ENCODE measurements at regions of chr11 and their contacts with region 1.

Region 1: GRCh38 chr11:2420502-2421225 is 20.1 kb downstream of the TSSC4 start:
- DNase-seq: peak; percentile 72 to 89
- ATAC-seq: peak; percentile 85 to 98 (median 95)
- H3K4me3 ChIP-seq: no peak overlapping the region
- H3K4me3 Mint-ChIP-seq: no peak overlapping the region
- H3K27ac ChIP-seq: no peak overlapping the region
- H3K27ac Mint-ChIP-seq: no peak overlapping the region
- H3K4me1 ChIP-seq: peaks cover 15% of the 10 kb centered on the region
- H3K4me1 Mint-ChIP-seq: peaks cover 0 to 5% of the 10 kb centered on the region in 2 donors
- H3K27me3 ChIP-seq: no peaks in the 10 kb centered on the region
- H3K27me3 Mint-ChIP-seq: no peaks in the 10 kb centered on the region
- CTCF ChIP-seq: peak; percentile 91

Region 2: GRCh38 chr11:2186669-2187279 is 233.9 kb before region 1 on chr11:
- intact Hi-C with region 1: loop called (anchors 1 kb)
- DNase-seq: peak; percentile 51 to 77
- ATAC-seq: peak; percentile 76 to 98 (median 92)
- H3K4me3 ChIP-seq: no peak overlapping the region
- H3K4me3 Mint-ChIP-seq: no peak overlapping the region
- H3K27ac ChIP-seq: no peak overlapping the region
- H3K27ac Mint-ChIP-seq: no peak overlapping the region
- H3K4me1 ChIP-seq: peaks cover 17% of the 10 kb centered on the region
- H3K4me1 Mint-ChIP-seq: peaks cover 0 to 5% of the 10 kb centered on the region in 2 donors
- H3K27me3 ChIP-seq: no peaks in the 10 kb centered on the region
- H3K27me3 Mint-ChIP-seq: peaks cover 15 to 18% of the 10 kb centered on the region in 2 donors
- CTCF ChIP-seq: peak; percentile 76

Region 3: GRCh38 chr11:2196970-2197770 is 223.5 kb before region 1 on chr11:
- intact Hi-C with region 1: loop called (anchors 1 kb)
- DNase-seq: peak; percentile 74 to 84
- ATAC-seq: peak; percentile 85 to 98 (median 96)
- H3K4me3 ChIP-seq: no peak overlapping the region
- H3K4me3 Mint-ChIP-seq: no peak overlapping the region
- H3K27ac ChIP-seq: no peak overlapping the region
- H3K27ac Mint-ChIP-seq: no peak overlapping the region
- H3K4me1 ChIP-seq: peaks cover 33% of the 10 kb centered on the region
- H3K4me1 Mint-ChIP-seq: peaks cover 0 to 28% of the 10 kb centered on the region in 2 donors
- H3K27me3 ChIP-seq: no peaks in the 10 kb centered on the region
- H3K27me3 Mint-ChIP-seq: peaks cover 0 to 12% of the 10 kb centered on the region in 2 donors
- CTCF ChIP-seq: peak; percentile 83

Region 4: DNA sequence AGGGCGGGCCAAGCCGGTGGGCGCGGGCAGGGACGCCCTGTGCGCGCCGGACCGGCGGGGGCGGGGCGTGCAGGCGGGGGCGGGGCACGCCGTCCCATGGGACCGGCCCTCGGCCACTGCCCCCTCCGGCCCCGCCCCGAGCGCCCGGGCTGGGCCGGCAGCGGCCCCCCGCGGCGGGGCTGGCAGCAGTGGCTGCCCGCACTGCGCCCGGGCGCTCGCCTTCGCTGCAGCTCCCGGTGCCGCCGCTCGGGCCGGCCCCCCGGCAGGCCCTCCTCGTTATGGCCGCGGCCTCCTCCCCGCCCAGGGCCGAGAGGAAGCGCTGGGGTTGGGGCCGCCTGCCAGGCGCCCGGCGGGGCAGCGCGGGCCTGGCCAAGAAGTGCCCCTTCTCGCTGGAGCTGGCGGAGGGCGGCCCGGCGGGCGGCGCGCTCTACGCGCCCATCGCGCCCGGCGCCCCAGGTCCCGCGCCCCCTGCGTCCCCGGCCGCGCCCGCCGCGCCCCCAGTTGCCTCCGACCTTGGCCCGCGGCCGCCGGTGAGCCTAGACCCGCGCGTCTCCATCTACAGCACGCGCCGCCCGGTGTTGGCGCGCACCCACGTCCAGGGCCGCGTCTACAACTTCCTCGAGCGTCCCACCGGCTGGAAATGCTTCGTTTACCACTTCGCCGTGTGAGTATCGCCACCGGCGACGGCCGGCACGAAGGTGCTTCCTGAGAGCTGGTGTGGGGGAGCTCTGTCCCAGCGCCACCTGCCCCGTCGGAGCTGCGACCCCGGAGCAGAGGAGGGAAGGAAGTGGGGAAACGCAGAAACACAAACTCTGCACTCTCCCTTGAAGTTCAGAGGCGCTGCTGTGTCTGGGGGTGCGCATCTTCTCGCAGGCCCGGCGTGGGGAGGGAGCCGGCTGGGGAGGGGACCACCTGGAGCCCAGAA is 24.4 kb after region 1 on chr11 and contains the start of gene KCNQ1:
- intact Hi-C with region 1: no loop called
- DNase-seq: peak in 1 of 2 donors; percentile 64
- ATAC-seq: peak; percentile 75 to 83 (median 76)
- H3K4me3 ChIP-seq: peak within 1 kb of the TSS; percentile 42
- H3K4me3 Mint-ChIP-seq: peak within 1 kb of the TSS; percentile 76
- H3K27ac ChIP-seq: no peak within 1 kb of the TSS
- H3K27ac Mint-ChIP-seq: no peak within 1 kb of the TSS
- H3K4me1 ChIP-seq: peaks cover 37% of the 10 kb centered on the region
- H3K4me1 Mint-ChIP-seq: peaks cover 0 to 13% of the 10 kb centered on the region in 2 donors
- H3K27me3 ChIP-seq: peaks cover 31% of the 10 kb centered on the region
- H3K27me3 Mint-ChIP-seq: peaks cover 19 to 24% of the 10 kb centered on the region in 2 donors
- CTCF ChIP-seq: no peak
- total RNA-seq, gene KCNQ1: 1.9 to 7.8 (median 3.3) TPM